HEK293 (cell line): ENCODE measurements at regions of chr1 and their contacts with region 1.

Region 1: DNA sequence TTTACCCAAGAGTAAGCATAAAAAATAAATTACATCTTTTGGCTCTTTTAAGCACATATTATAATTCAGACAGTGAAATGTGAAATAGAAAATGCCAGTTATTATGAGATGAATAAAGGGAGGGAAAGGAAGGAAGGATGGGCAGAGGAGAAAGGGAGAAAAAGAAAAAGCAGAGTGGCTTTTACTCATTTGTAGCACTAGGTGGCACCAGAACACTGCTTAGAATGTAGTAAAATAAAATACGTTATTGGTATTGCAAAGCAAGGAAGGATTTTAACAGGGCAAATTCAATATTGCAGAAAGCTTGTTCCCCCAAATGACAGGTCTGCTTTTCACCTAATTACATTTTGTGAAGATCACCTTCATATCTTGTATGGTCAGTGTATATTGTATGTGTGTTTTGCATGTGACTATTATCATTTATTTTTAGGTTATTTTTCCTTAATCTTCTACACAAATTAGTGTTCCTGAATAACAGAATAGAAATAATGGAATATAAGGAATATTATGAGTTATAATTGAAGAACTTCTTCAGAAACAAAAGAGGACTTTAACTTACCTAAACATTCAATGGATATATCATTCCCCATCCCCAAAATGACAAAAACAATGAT is 9.1 kb upstream of the PCNX2 start:
- H3K4me3 ChIP-seq: no peak overlapping the region
- H3K27ac ChIP-seq: no peak overlapping the region
- H3K4me1 ChIP-seq: no peaks in the 10 kb centered on the region
- CTCF ChIP-seq: peak; percentile 92

Region 2: DNA sequence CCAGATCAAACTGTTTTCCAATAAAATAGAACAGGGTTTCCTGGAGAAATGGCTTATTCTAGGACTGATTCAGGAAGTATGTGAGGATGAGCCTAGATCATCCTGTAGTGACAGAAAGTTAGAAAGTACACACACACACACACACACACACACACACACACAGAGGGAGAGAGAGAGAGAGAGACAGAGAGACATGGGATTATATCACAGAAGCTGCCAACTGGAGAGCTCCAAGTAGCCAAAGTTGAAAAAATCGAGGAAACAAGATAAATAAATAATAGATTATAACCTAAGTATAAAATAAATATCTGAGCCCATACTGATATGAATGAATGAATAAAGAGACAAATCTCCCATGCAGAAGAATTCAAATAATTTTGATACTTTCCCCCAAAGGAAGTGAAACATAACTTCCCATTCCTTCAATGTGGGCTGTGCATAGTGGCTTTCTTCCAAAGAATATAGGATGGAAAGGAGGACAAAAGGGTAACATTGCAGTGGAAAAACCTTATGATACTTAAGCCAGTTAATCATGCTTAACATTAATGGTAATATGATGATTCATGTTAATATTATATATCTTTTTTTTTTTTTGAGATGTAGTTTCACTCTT is 182.5 kb before region 1 on chr1:
- CTCF ChIA-PET with region 1: no interaction called
- POLR2A ChIA-PET with region 1: no interaction called
- H3K4me3 ChIP-seq: no peak overlapping the region
- H3K27ac ChIP-seq: no peak overlapping the region
- H3K4me1 ChIP-seq: no peaks in the 10 kb centered on the region
- CTCF ChIP-seq: no peak

Region 3: GRCh38 chr1:233319272-233319671 is 14.7 kb after region 1 on chr1:
- CTCF ChIA-PET with region 1: interaction called, 55 read pairs
- POLR2A ChIA-PET with region 1: no interaction called
- H3K4me3 ChIP-seq: no peak overlapping the region
- H3K27ac ChIP-seq: no peak overlapping the region
- H3K4me1 ChIP-seq: peaks cover 5% of the 10 kb centered on the region; the same call in 1 of the 2 replicates
- CTCF ChIP-seq: no peak

Region 4: DNA sequence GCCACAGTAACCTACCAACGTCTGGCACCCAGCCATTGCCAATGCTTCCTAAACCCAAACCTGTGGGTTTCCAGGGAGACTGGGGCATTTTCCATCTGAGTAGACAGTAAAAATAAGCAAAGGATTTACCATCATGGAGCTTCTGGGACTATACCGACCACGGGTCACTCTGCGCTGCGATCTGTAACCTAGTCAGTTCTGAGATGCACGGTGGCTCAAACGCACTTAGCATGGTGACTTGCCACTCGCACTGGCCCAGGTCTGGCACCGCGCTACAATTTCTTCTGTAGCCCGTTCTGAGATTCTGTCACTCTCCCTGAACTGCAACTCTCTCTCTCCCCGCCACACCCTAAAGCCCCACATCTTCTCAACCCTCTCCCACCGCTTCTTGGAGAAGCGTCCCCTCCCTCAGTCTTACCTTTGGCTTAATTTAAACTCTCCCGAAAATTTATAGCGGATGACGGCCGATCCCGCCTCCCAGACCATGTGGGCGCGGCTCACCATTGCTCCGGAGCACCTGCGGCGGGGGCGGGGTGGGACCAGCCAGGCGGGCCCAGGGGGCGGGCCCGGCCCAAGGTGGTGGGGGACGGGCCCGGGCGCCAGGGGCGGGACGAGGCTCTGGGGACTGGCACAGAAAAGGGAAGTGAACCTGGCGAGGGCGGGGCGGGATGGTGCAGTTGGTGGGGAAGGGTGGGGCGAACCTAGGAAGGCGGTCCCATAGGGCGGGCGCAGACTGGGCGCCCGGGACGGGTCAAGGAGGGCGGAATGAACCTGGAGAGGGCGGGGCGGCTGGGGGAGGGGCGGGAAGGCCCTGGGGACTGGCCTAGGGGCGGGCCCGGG is 22.4 kb after region 1 on chr1:
- CTCF ChIA-PET with region 1: interaction called, 20 read pairs
- POLR2A ChIA-PET with region 1: no interaction called
- H3K4me3 ChIP-seq: peak overlapping the region; percentile 53
- H3K27ac ChIP-seq: peak overlapping the region; percentile 69
- H3K4me1 ChIP-seq: peaks cover 14% of the 10 kb centered on the region; the same call in 1 of the 2 replicates
- CTCF ChIP-seq: 0 out of 2 replicates have a peak, but pooled peaks have one; percentile 15

Region 5: DNA sequence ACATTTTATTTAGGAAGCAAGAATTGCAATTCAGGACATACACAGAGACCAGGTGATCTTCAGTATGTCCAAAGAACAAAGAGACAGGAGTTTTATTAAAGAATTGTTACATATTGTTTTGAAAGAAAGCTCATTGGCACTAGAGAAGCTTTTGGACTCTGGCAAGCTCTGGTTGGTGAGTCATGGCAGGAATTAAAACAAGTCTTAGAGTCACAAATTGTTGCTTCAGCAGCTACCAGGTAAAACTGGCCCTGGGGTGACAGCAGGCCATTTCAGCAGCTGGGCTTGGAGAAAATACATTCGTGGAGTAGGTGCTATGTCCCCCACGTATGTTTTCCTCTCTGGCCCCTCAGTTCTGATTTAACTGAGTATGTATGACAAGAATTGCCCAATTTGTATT is 81.7 kb after region 1 on chr1:
- CTCF ChIA-PET with region 1: interaction called, 12 read pairs
- POLR2A ChIA-PET with region 1: no interaction called
- H3K4me3 ChIP-seq: no peak overlapping the region
- H3K27ac ChIP-seq: no peak overlapping the region
- H3K4me1 ChIP-seq: no peaks in the 10 kb centered on the region
- CTCF ChIP-seq: no peak

Region 6: DNA sequence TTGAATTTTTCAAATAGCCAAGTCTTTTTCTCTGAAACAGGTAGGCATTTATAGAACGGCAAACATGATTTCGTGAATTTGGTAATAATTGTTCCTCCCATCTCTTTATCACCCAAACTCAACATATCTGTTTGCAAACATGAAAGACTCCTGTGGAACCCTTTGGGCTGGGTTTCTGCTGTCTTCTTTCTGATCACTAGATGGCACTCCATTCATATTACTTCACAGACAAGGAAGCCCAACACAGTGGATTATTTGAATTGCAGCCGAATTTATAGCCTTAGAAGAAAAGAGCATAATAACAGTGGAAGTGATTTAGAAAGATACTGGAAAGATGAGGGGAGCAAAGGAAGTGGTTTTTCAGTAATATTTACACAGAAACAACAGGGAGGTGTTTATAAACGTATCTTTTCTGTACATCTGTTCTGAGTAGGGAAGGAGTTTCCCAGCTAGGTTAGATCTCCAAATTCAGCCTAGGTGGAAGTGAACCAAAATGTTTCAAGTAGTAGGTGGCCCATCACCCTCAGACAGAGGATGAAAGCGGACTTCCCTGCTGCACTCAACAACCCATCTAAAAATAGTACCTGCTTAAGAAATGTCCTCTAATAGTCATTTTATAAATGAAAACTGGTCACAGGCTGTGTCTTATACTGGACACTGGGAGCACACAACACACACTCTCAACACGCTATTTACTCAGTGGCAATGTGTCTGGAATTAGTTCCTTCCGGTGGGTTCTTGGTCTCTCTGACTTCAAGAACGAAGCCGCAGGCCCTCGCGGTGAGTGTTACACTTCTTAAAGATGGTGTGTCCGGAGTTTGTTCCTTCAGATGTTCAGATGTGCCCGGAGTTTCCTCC is 90.5 kb after region 1 on chr1:
- CTCF ChIA-PET with region 1: interaction called, 11 read pairs
- POLR2A ChIA-PET with region 1: no interaction called
- H3K4me3 ChIP-seq: no peak overlapping the region
- H3K27ac ChIP-seq: no peak overlapping the region
- H3K4me1 ChIP-seq: no peaks in the 10 kb centered on the region
- CTCF ChIP-seq: peak; percentile 80

Region 7: GRCh38 chr1:234170622-234171021 is 866.0 kb after region 1 on chr1:
- CTCF ChIA-PET with region 1: no interaction called
- POLR2A ChIA-PET with region 1: no interaction called
- H3K4me3 ChIP-seq: no peak overlapping the region
- H3K27ac ChIP-seq: no peak overlapping the region
- H3K4me1 ChIP-seq: no peaks in the 10 kb centered on the region
- CTCF ChIP-seq: no peak